ENCODE measurements at regions of chr20 and their contacts with region 1.

Region 1: GRCh38 chr20:33443512-33444239 is at the start of gene SNTA1:
- DNase-seq: peak; percentile 96 to 98
- ATAC-seq: peak; percentile 70
- H3K4me3 ChIP-seq: peak within 1 kb of the TSS; percentile 71 to 98 (median 78)
- H3K27ac ChIP-seq: peak within 1 kb of the TSS; percentile 97 to 98 (median 98)
- H3K4me1 ChIP-seq: peaks cover 34 to 44% of the 10 kb centered on the region in 2 donors
- H3K27me3 ChIP-seq: no peaks in the 10 kb centered on the region
- CTCF ChIP-seq: peak in 1 of 5 experiments; percentile 4
- POLR2A ChIP-seq: peak; percentile 94 to 95
- total RNA-seq, gene SNTA1: 198 to 320 (median 219) TPM

Region 2: DNA sequence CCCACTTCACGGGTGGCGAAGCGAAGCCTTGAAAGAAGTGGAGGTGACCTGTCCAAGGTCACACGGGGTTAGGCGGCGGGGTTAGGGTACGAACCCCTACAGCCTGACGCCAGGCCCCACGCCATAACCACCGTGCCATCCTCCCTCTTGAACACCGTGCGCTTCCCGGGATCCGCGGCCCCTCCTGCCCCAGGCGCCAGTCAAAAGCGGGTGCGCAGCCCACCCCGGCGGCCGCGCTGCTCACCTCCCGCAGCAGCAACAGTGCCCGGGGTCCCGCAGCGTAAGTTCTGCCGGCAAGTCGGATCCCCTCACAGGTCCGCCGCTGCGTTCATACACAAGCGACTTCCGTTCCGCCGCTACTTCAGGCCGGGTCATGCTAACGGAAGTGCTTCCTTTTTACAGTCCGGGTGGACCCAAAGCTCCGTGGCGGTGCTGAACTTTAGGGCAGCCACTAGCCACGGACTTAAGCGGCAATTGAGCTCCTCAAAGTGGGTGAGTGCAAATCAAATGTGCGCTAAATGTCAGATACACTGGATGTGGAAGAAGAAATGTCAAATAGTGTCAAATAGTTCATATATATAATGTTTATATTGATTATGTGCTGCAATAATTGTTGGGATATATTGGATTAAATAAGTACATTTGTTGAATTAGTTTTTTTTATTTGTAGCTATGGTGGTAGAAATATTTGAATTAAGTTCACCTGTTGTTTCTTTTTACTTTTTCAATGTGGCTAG is 42.3 kb before region 1 on chr20 and contains the start of gene CDK5RAP1:
- in situ Hi-C with region 1: no loop called
- intact Hi-C with region 1: loop called (anchors 1 kb)
- DNase-seq: peak; percentile 76 to 85
- ATAC-seq: peak; percentile 97
- H3K4me3 ChIP-seq: peak within 1 kb of the TSS; percentile 86 to 95 (median 90)
- H3K27ac ChIP-seq: peak within 1 kb of the TSS; percentile 74 to 87 (median 82)
- H3K4me1 ChIP-seq: peaks cover 27 to 34% of the 10 kb centered on the region in 2 donors
- H3K27me3 ChIP-seq: no peaks in the 10 kb centered on the region
- CTCF ChIP-seq: peak in 1 of 5 experiments; percentile 17
- POLR2A ChIP-seq: peak in 1 of 2 donors; percentile 47
- total RNA-seq, gene CDK5RAP1: 23.2 to 27.6 (median 25.8) TPM

Region 3: DNA sequence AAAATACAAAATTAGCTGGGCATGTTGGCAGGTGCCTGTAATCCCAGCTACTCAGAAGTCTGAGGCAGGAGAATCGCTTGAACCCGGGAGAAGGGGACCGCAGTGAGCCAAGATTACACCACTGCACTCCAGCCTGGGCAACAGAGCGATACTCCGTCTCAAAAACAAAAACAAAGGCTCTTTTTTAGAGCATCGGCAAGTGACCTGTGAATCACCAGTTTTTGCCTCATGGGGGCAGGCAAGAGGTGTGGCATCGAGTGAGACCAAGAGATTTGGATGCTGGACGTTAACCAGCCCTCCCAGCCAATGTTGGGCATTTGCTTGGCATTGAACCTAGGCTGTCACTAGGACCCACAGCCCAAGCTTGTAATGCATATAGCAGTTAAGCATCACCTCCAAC is 27.7 kb before region 1 on chr20:
- in situ Hi-C with region 1: no loop called
- intact Hi-C with region 1: loop called (anchors 1 kb)
- DNase-seq: peak; percentile 43 to 67
- ATAC-seq: peak; percentile 31 to 52
- H3K4me3 ChIP-seq: no peak overlapping the region
- H3K27ac ChIP-seq: peak overlapping the region; percentile 97 to 98 (median 98)
- H3K4me1 ChIP-seq: peaks cover 36 to 37% of the 10 kb centered on the region in 2 donors
- H3K27me3 ChIP-seq: no peaks in the 10 kb centered on the region
- CTCF ChIP-seq: peak; percentile 51 to 70 (median 60)
- POLR2A ChIP-seq: no peak

Region 4: GRCh38 chr20:33489495-33490022 is 45.9 kb after region 1 on chr20:
- in situ Hi-C with region 1: no loop called
- intact Hi-C with region 1: loop called (anchors 2 kb)
- DNase-seq: peak; percentile 99
- ATAC-seq: peak; percentile 96
- H3K4me3 ChIP-seq: peak overlapping the region; percentile 45 to 90 (median 56)
- H3K27ac ChIP-seq: peak overlapping the region; percentile 88 to 96 (median 96)
- H3K4me1 ChIP-seq: peaks cover 12 to 13% of the 10 kb centered on the region in 2 donors
- H3K27me3 ChIP-seq: no peaks in the 10 kb centered on the region
- CTCF ChIP-seq: no peak
- POLR2A ChIP-seq: peak; percentile 97 to 99

Measured in gastrocnemius medialis (tissue), 4 donors.